ENCODE measurements at regions of chr2 and their contacts with region 1.

Region 1: GRCh38 chr2:240143801-240144648 is 3.6 kb upstream of the OTOS start:
- DNase-seq: peak; percentile 72 to 91 (median 82)
- ATAC-seq: peak; percentile 98
- H3K4me3 ChIP-seq: no peak overlapping the region
- H3K4me3 Mint-ChIP-seq: no peak overlapping the region
- H3K27ac ChIP-seq: no peak overlapping the region
- H3K27ac Mint-ChIP-seq: no peak overlapping the region
- H3K4me1 ChIP-seq: no peaks in the 10 kb centered on the region
- H3K4me1 Mint-ChIP-seq: peaks cover 3% of the 10 kb centered on the region
- H3K27me3 ChIP-seq: peaks cover 0 to 4% of the 10 kb centered on the region in 2 experiments
- H3K27me3 Mint-ChIP-seq: peaks cover 7% of the 10 kb centered on the region
- CTCF ChIP-seq: peak; percentile 87

Region 2: DNA sequence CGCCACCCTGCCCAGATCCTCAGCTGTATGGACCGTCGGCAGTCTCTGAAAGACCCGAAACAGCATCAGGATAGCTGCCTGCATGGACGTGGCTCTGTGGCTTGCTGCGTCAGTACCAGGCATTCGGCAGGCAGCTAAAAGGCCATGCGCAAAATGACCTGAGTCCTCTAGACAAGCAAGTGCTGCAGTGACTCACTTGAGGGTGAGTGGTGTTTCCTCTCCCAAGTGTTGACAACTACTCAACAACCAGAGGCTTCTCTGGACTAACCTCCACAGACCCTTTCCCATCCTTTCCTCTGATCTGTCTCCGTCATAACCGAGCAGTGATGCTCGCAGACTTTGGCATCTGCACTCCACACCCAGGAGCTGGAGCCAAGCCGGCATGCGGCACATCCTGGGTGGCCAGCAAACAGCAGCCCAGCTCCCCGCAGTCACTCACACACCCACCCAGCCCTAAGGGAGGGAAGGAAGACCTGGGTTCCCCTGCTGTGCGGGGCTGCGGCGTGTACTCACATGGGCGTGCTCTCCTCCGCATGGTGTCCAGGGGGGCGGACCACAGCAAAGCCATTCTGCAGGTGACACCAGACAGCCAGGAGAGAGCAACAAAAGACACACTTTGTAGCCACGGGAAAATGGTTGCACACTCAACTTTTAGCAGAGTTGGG is 1056.8 kb before region 1 on chr2:
- CTCF ChIA-PET with region 1: no interaction called
- POLR2A ChIA-PET with region 1: no interaction called
- intact Hi-C with region 1: no loop called
- DNase-seq: no peak
- ATAC-seq: no peak
- H3K4me3 ChIP-seq: no peak overlapping the region
- H3K4me3 Mint-ChIP-seq: no peak overlapping the region
- H3K27ac ChIP-seq: no peak overlapping the region
- H3K27ac Mint-ChIP-seq: no peak overlapping the region
- H3K4me1 ChIP-seq: no peaks in the 10 kb centered on the region
- H3K4me1 Mint-ChIP-seq: no peaks in the 10 kb centered on the region
- H3K27me3 ChIP-seq: no peaks in the 10 kb centered on the region
- H3K27me3 Mint-ChIP-seq: no peaks in the 10 kb centered on the region
- CTCF ChIP-seq: no peak

Region 3: DNA sequence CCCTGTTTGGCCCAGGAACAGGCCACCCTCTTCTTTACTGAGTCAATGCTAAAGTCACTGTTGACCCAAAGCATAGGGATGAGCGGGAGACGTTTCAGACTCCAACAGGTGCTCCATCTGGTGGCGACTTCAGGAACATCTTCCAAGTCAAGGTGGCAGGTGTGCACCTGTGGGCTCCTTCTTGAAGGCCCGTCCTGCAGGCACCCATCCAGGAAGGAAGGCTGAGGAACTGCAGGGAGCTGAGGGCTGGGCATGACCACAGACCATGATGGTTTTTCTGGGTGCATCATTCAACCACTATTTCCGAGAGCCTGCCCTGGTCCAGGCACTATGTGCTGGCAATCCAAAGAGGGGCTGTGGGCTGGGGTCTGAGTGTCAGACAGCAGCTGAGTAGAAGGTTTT is 261.7 kb before region 1 on chr2:
- CTCF ChIA-PET with region 1: no interaction called
- POLR2A ChIA-PET with region 1: no interaction called
- intact Hi-C with region 1: loop called in 1 of 2 experiments (anchors 5 kb)
- DNase-seq: peak; percentile 33 to 70 (median 53)
- ATAC-seq: no peak
- H3K4me3 ChIP-seq: no peak overlapping the region
- H3K4me3 Mint-ChIP-seq: no peak overlapping the region
- H3K27ac ChIP-seq: no peak overlapping the region
- H3K27ac Mint-ChIP-seq: no peak overlapping the region
- H3K4me1 ChIP-seq: no peaks in the 10 kb centered on the region
- H3K4me1 Mint-ChIP-seq: peaks cover 3% of the 10 kb centered on the region
- H3K27me3 ChIP-seq: no peaks in the 10 kb centered on the region
- H3K27me3 Mint-ChIP-seq: peaks cover 12% of the 10 kb centered on the region
- CTCF ChIP-seq: peak; percentile 55

Region 4: GRCh38 chr2:239934571-239935171 is 209.4 kb before region 1 on chr2:
- CTCF ChIA-PET with region 1: interaction called, 4 read pairs
- POLR2A ChIA-PET with region 1: no interaction called
- intact Hi-C with region 1: loop called in 1 of 2 experiments (anchors 2 kb)
- DNase-seq: peak; percentile 31 to 73 (median 59)
- ATAC-seq: peak; percentile 80
- H3K4me3 ChIP-seq: no peak overlapping the region
- H3K4me3 Mint-ChIP-seq: no peak overlapping the region
- H3K27ac ChIP-seq: no peak overlapping the region
- H3K27ac Mint-ChIP-seq: no peak overlapping the region
- H3K4me1 ChIP-seq: no peaks in the 10 kb centered on the region
- H3K4me1 Mint-ChIP-seq: peaks cover 5% of the 10 kb centered on the region
- H3K27me3 ChIP-seq: no peaks in the 10 kb centered on the region
- H3K27me3 Mint-ChIP-seq: peaks cover 7% of the 10 kb centered on the region
- CTCF ChIP-seq: peak; percentile 76

Region 5: DNA sequence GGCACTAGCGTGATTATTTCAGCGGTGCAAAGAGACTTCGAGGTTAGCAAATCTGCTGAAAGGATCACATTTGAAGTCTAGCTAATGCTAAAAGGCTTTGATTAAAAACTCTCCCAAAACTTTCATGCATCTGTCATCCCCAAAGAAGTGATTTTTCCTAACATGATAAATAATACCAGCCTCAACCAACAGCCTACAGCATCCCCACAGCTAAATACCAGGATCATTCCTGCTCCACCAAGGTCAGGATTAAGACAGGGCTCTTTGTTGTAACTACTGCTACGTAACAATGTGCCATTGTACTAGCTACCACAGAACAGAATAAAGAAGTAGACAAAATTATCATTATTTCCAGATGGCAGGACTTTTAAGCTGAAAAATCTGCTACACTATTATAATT is 92.3 kb before region 1 on chr2:
- CTCF ChIA-PET with region 1: interaction called, 11 read pairs
- POLR2A ChIA-PET with region 1: no interaction called
- intact Hi-C with region 1: no loop called
- DNase-seq: no peak
- ATAC-seq: no peak
- H3K4me3 ChIP-seq: no peak overlapping the region
- H3K4me3 Mint-ChIP-seq: no peak overlapping the region
- H3K27ac ChIP-seq: no peak overlapping the region
- H3K27ac Mint-ChIP-seq: no peak overlapping the region
- H3K4me1 ChIP-seq: no peaks in the 10 kb centered on the region
- H3K4me1 Mint-ChIP-seq: no peaks in the 10 kb centered on the region
- H3K27me3 ChIP-seq: peaks cover 0 to 8% of the 10 kb centered on the region in 2 experiments
- H3K27me3 Mint-ChIP-seq: peaks cover 34% of the 10 kb centered on the region
- CTCF ChIP-seq: no peak

Region 6: DNA sequence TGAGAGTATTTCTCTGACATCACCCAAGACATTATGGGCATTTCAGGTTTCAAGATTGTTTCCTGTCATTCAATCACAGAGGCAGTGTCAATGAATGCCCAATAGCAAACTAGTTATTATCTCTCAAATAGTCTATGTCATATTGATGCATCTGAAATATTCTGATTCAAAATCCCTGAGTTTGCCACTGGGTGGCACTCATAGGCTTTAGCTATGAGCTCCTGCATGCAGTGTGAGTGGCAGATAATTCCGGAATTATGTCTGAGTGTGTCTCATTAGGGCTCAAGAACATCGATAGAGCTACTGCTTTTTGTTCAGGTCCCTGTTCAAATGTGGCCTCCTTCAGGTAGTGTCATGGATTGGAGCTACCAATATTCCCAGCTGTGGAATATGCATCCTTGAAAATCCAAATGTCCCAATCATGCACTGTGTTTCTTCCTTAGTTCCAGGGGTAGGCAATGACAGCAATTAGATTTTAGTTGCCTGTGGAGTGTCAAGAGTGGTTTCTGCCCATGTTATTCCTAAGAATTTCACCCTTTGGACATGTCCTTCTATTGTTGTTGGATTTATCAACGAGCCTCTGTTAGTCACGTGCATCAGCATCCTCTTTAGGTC is 82.9 kb before region 1 on chr2:
- CTCF ChIA-PET with region 1: interaction called, 141 read pairs
- POLR2A ChIA-PET with region 1: interaction called, 5 read pairs
- intact Hi-C with region 1: loop called in 1 of 2 experiments (anchors 1 kb)
- DNase-seq: peak in 8 of 9 experiments; percentile 24 to 70 (median 50)
- ATAC-seq: peak; percentile 73
- H3K4me3 ChIP-seq: no peak overlapping the region
- H3K4me3 Mint-ChIP-seq: no peak overlapping the region
- H3K27ac ChIP-seq: no peak overlapping the region
- H3K27ac Mint-ChIP-seq: no peak overlapping the region
- H3K4me1 ChIP-seq: no peaks in the 10 kb centered on the region
- H3K4me1 Mint-ChIP-seq: no peaks in the 10 kb centered on the region
- H3K27me3 ChIP-seq: peaks cover 0 to 7% of the 10 kb centered on the region in 2 experiments
- H3K27me3 Mint-ChIP-seq: peaks cover 14% of the 10 kb centered on the region
- CTCF ChIP-seq: peak; percentile 72

Region 7: DNA sequence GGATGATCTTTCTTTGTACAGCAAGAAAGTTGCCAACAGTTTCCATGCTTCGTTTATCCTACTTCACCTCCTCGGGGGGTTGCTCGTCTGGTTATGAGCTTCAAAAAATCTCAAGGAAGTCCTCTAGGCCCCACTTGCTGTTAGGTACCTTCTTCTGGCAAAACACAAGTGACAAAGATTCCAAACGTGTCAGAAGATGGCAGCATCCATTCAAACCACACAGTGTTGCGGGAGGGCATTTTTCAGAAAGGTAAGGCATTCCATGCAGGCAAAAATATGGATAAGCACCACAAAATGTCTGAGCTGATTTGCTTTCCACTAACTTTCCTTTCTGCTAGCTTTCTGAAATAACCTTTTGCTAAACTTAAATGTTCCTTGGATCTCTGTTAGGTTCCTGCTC is 77.5 kb before region 1 on chr2:
- CTCF ChIA-PET with region 1: interaction called, 141 read pairs
- POLR2A ChIA-PET with region 1: interaction called, 5 read pairs
- intact Hi-C with region 1: loop called in 1 of 2 experiments (anchors 1 kb)
- DNase-seq: no peak
- ATAC-seq: no peak
- H3K4me3 ChIP-seq: no peak overlapping the region
- H3K4me3 Mint-ChIP-seq: no peak overlapping the region
- H3K27ac ChIP-seq: no peak overlapping the region
- H3K27ac Mint-ChIP-seq: no peak overlapping the region
- H3K4me1 ChIP-seq: no peaks in the 10 kb centered on the region
- H3K4me1 Mint-ChIP-seq: no peaks in the 10 kb centered on the region
- H3K27me3 ChIP-seq: no peaks in the 10 kb centered on the region
- H3K27me3 Mint-ChIP-seq: peaks cover 23% of the 10 kb centered on the region
- CTCF ChIP-seq: no peak

Region 8: GRCh38 chr2:240155048-240155744 is 11.2 kb after region 1 on chr2:
- CTCF ChIA-PET with region 1: interaction called, 10 read pairs
- POLR2A ChIA-PET with region 1: no interaction called
- intact Hi-C with region 1: no loop called
- DNase-seq: no peak
- ATAC-seq: no peak
- H3K4me3 ChIP-seq: no peak overlapping the region
- H3K4me3 Mint-ChIP-seq: no peak overlapping the region
- H3K27ac ChIP-seq: no peak overlapping the region
- H3K27ac Mint-ChIP-seq: no peak overlapping the region
- H3K4me1 ChIP-seq: no peaks in the 10 kb centered on the region
- H3K4me1 Mint-ChIP-seq: no peaks in the 10 kb centered on the region
- H3K27me3 ChIP-seq: no peaks in the 10 kb centered on the region
- H3K27me3 Mint-ChIP-seq: peaks cover 23% of the 10 kb centered on the region
- CTCF ChIP-seq: no peak

Region 9: GRCh38 chr2:240196716-240197461 is 52.9 kb after region 1 on chr2:
- CTCF ChIA-PET with region 1: no interaction called
- POLR2A ChIA-PET with region 1: no interaction called
- intact Hi-C with region 1: no loop called
- DNase-seq: no peak
- ATAC-seq: no peak
- H3K4me3 ChIP-seq: no peak overlapping the region
- H3K4me3 Mint-ChIP-seq: no peak overlapping the region
- H3K27ac ChIP-seq: no peak overlapping the region
- H3K27ac Mint-ChIP-seq: no peak overlapping the region
- H3K4me1 ChIP-seq: no peaks in the 10 kb centered on the region
- H3K4me1 Mint-ChIP-seq: no peaks in the 10 kb centered on the region
- H3K27me3 ChIP-seq: no peaks in the 10 kb centered on the region
- H3K27me3 Mint-ChIP-seq: peaks cover 20% of the 10 kb centered on the region
- CTCF ChIP-seq: no peak

Measured in CD8-positive, alpha-beta T cell (primary cell).